Gastrocnemius medialis (tissue), 4 donors: ENCODE measurements at regions of chr13 and their contacts with region 1.

Region 1: GRCh38 chr13:102555917-102556553 is 40.8 kb upstream of the TPP2 start:
- DNase-seq: no peak
- ATAC-seq: peak in 1 of 2 donors; percentile 36
- H3K4me3 ChIP-seq: no peak overlapping the region
- H3K27ac ChIP-seq: no peak overlapping the region
- H3K4me1 ChIP-seq: no peaks in the 10 kb centered on the region
- H3K27me3 ChIP-seq: no peaks in the 10 kb centered on the region
- CTCF ChIP-seq: peak in 1 of 5 experiments; percentile 17
- POLR2A ChIP-seq: no peak

Region 2: DNA sequence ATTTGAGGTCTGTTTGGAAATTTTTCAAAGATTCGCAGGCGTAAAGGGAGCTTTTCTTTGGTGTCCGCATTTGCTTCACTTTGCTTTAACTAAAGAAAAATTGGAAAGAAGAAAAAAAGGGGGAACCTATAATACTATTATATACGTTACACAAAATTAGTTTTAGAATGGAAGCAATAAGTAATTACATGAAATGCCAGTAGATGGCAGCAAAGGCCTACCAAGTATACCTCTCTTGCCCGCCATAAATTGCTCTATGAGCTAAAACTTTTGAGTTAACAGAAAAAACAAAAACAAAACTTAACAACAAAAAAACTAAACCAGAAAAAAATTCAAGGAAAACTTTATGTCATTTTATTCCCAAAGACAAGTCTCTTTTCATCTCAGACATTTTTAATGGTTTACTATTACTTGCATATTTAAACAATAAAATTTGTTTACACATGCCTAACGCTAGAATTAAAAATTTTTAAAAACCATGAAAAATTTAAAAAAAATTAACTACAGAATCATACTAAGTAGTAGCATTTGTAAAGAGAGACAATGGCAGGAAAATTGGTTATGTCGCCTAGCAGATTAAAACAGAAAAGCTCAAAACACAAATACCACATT is 1411.1 kb before region 1 on chr13:
- in situ Hi-C with region 1: no loop called
- intact Hi-C with region 1: loop called (anchors 10 kb)
- DNase-seq: no peak
- ATAC-seq: no peak
- H3K4me3 ChIP-seq: no peak overlapping the region
- H3K27ac ChIP-seq: no peak overlapping the region
- H3K4me1 ChIP-seq: no peaks in the 10 kb centered on the region
- H3K27me3 ChIP-seq: peaks cover 0 to 2% (median 0%) of the 10 kb centered on the region in 3 donors
- CTCF ChIP-seq: peak in 4 of 5 experiments; percentile 37 to 66 (median 56)
- POLR2A ChIP-seq: no peak

Region 3: GRCh38 chr13:101930331-101930730 is 625.7 kb before region 1 on chr13:
- in situ Hi-C with region 1: loop called in 1 of 4 experiments (anchors 10 kb)
- intact Hi-C with region 1: no loop called
- DNase-seq: no peak
- ATAC-seq: no peak
- H3K4me3 ChIP-seq: no peak overlapping the region
- H3K27ac ChIP-seq: no peak overlapping the region
- H3K4me1 ChIP-seq: no peaks in the 10 kb centered on the region
- H3K27me3 ChIP-seq: no peaks in the 10 kb centered on the region
- CTCF ChIP-seq: no peak
- POLR2A ChIP-seq: no peak